Common myeloid progenitor, CD34-positive (primary cell): ENCODE measurements at regions of chr6 and their contacts with region 1.

Region 1: GRCh38 chr6:158595223-158595622 is 35.3 kb downstream of the TMEM181 start:
- DNase-seq: peak; percentile 37 to 67 (median 61)
- H3K4me3 ChIP-seq: no peak overlapping the region
- H3K27ac ChIP-seq: no peak overlapping the region
- H3K4me1 ChIP-seq: peaks cover 0 to 2% (median 0%) of the 10 kb centered on the region in 4 experiments
- H3K27me3 ChIP-seq: no peaks in the 10 kb centered on the region

Region 2: GRCh38 chr6:158213925-158214674 is 381.1 kb before region 1 on chr6:
- CTCF ChIA-PET with region 1: interaction called, 13 read pairs
- POLR2A ChIA-PET with region 1: interaction called, 3 read pairs
- DNase-seq: peak; percentile 74 to 85 (median 78)
- H3K4me3 ChIP-seq: no peak overlapping the region
- H3K27ac ChIP-seq: no peak overlapping the region
- H3K4me1 ChIP-seq: no peaks in the 10 kb centered on the region
- H3K27me3 ChIP-seq: no peaks in the 10 kb centered on the region

Region 3: DNA sequence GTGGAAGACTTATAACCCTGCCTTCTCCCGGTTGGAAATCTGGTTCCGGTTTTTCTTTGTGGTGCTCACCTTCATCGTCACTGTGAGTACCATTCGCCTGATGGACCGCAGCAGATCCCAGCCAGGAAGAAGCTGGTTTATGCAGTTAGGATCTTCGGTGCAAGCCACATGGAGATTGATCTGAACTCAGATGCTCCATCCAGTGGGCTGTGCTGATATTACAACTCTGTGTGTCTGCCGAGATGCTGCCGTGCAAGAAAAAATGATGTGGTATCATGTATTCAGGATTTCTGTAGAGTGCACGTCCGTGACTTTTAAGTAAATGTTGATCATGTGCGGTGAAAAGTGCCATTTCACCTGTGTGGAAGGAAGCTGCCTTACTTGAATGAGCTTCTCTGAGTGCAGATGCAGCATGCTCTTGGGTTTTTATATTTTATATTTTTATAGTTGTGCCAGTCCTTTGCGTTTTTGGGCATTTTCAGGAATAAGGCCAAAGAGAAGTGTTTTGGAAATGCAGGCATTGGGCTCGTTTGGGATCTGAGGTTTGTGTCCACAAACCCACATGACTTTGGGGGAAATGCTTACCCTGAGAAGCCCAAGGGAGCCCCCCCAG is 10.1 kb after region 1 on chr6:
- CTCF ChIA-PET with region 1: interaction called, 12 read pairs
- POLR2A ChIA-PET with region 1: no interaction called
- DNase-seq: peak; percentile 69 to 82 (median 77)
- H3K4me3 ChIP-seq: no peak overlapping the region
- H3K27ac ChIP-seq: no peak overlapping the region
- H3K4me1 ChIP-seq: no peaks in the 10 kb centered on the region
- H3K27me3 ChIP-seq: no peaks in the 10 kb centered on the region